A549 (cell line): ENCODE measurements at regions of chr2 and their contacts with region 1.

Region 1: DNA sequence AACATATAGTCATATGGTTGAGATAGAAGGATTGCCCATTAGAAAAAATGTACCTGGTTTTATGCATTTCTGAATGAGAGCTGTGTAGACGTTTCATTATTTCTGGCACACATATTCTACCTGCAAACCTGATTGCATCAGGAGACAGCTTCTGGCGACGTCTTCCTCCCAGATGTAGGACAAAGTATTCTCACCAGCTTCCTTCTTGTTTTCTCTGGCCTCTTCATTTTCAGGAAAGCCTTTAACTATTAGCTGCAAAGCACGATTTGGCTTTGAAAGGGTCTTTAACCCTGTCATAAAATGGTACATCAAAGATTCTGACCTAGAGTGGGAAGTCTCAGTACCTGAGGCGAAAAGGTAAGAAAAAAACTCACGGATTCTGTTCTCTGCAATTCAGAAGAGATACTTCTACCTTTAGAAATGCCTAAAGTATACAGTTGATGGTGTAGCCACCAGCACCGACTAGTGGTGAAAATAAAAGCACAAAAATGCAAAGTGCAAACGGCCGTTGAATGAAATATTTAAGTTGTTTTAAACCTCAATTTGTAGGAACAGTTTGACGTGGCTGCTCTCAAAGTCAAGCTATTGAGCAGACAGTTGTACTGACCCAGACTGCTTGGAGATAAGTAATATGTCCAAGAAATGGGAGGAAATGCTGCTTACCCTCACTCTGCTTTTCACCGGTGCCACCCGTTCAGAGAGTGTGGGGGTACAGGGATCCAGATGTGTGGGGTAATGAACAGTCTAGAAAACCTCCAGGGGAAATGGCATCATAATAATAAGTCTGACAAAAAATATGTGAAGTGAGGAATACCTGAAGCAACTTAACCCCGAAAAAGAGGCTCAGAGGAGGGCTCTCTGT is 20.2 kb downstream of the IL18RAP start:
- DNase-seq: peak; percentile 13 to 43
- ATAC-seq: peak; percentile 81 to 82
- H3K4me3 ChIP-seq: no peak overlapping the region
- H3K27ac ChIP-seq: no peak overlapping the region
- H3K4me1 ChIP-seq: no peaks in the 10 kb centered on the region
- CTCF ChIP-seq: peak; percentile 80
- EP300 ChIP-seq: no peak
- POLR2A ChIP-seq: no peak
- RAD21 ChIP-seq: peak; percentile 72 to 76

Region 2: GRCh38 chr2:101883863-101884262 is 559.3 kb before region 1 on chr2:
- CTCF ChIA-PET with region 1: interaction called, 18 read pairs
- POLR2A ChIA-PET with region 1: no interaction called
- DNase-seq: peak; percentile 31 to 51
- ATAC-seq: peak; percentile 50 to 87; a peak in 4 of 6 replicates
- H3K4me3 ChIP-seq: no peak overlapping the region
- H3K27ac ChIP-seq: no peak overlapping the region
- H3K4me1 ChIP-seq: no peaks in the 10 kb centered on the region
- CTCF ChIP-seq: peak; percentile 70
- EP300 ChIP-seq: no peak
- POLR2A ChIP-seq: no peak
- RAD21 ChIP-seq: peak; percentile 66 to 67

Region 3: DNA sequence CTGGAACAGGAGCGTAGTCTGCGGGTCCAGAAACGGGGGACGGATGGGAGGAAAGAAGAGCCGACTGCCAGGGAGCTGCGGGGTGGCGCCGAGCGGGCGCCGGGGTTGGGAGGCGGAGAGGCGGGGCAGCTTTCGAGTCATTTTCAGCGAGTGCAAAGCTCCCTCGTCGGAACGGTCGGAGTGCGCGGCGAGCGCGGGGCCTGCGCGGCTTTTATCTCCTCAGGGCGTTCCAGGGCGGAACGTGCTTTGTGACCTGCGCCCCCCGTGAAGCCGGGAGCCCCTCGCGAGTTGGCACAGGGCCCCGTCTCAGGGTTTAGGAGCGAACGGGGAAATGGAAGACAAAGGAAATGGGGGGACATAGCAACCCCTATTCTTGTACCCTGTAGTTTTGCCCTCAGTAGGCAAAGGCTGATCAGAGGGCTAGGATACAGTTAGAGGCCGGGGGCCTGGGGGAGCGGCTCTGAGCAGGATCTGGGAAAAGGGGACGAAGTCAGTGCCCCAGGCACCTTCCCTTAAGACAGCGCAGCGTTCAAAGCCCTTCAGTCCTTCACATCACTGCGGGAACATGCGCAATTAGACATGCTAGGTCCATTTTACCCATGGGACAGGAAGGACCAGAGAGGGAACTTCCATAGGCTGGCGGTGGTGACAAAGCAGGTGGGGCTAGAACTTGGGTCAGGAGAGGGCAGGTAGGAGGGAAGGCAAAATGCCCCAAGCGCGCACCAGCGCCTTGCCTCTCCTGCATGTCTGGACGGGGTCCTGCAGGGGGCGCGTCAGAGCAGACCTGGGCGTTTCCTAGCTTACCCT is 192.0 kb before region 1 on chr2:
- CTCF ChIA-PET with region 1: interaction called, 10 read pairs
- POLR2A ChIA-PET with region 1: no interaction called
- DNase-seq: peak; percentile 43 to 68
- ATAC-seq: peak; percentile 82 to 93
- H3K4me3 ChIP-seq: peak overlapping the region; percentile 50
- H3K27ac ChIP-seq: peak overlapping the region; percentile 61 to 79; a peak in 5 of 6 replicates
- H3K4me1 ChIP-seq: no peaks in the 10 kb centered on the region
- CTCF ChIP-seq: peak; percentile 72
- EP300 ChIP-seq: no peak
- POLR2A ChIP-seq: no peak
- RAD21 ChIP-seq: peak; percentile 47 to 49

Region 4: GRCh38 chr2:102391565-102391964 is 51.6 kb before region 1 on chr2:
- CTCF ChIA-PET with region 1: no interaction called
- POLR2A ChIA-PET with region 1: no interaction called
- DNase-seq: no peak
- ATAC-seq: no peak
- H3K4me3 ChIP-seq: no peak overlapping the region
- H3K27ac ChIP-seq: no peak overlapping the region
- H3K4me1 ChIP-seq: no peaks in the 10 kb centered on the region
- CTCF ChIP-seq: no peak
- EP300 ChIP-seq: no peak
- POLR2A ChIP-seq: no peak
- RAD21 ChIP-seq: no peak

Region 5: GRCh38 chr2:102460467-102460866 is 17.3 kb after region 1 on chr2:
- CTCF ChIA-PET with region 1: interaction called, 11 read pairs
- POLR2A ChIA-PET with region 1: no interaction called
- DNase-seq: no peak
- ATAC-seq: no peak
- H3K4me3 ChIP-seq: no peak overlapping the region
- H3K27ac ChIP-seq: no peak overlapping the region
- H3K4me1 ChIP-seq: no peaks in the 10 kb centered on the region
- CTCF ChIP-seq: no peak
- EP300 ChIP-seq: no peak
- POLR2A ChIP-seq: no peak
- RAD21 ChIP-seq: no peak